CD4-positive, alpha-beta T cell (primary cell): ENCODE measurements at regions of chr12 and their contacts with region 1.

Region 1: GRCh38 chr12:111942557-111942956 is 70.4 kb downstream of the TMEM116 start:
- DNase-seq: no peak
- ATAC-seq: no peak
- H3K4me3 ChIP-seq: no peak overlapping the region
- H3K4me3 Mint-ChIP-seq: no peak overlapping the region
- H3K27ac ChIP-seq: no peak overlapping the region
- H3K27ac Mint-ChIP-seq: no peak overlapping the region
- H3K4me1 ChIP-seq: peaks cover 6% of the 10 kb centered on the region
- H3K4me1 Mint-ChIP-seq: peaks cover 18% of the 10 kb centered on the region
- H3K27me3 ChIP-seq: no peaks in the 10 kb centered on the region
- H3K27me3 Mint-ChIP-seq: no peaks in the 10 kb centered on the region
- CTCF ChIP-seq: no peak

Region 2: GRCh38 chr12:111993292-111994150 is 51.0 kb after region 1 on chr12:
- CTCF ChIA-PET with region 1: interaction called, 3 read pairs
- POLR2A ChIA-PET with region 1: interaction called, 13 read pairs
- intact Hi-C with region 1: loop called in 1 of 2 experiments (anchors 5 kb)
- DNase-seq: peak in 7 of 14 experiments; percentile 18 to 72 (median 52)
- ATAC-seq: peak; percentile 78
- H3K4me3 ChIP-seq: peak overlapping the region; percentile 57
- H3K4me3 Mint-ChIP-seq: peak overlapping the region; percentile 81
- H3K27ac ChIP-seq: peak overlapping the region; percentile 31 to 44
- H3K27ac Mint-ChIP-seq: peak overlapping the region; percentile 86
- H3K4me1 ChIP-seq: peaks cover 56% of the 10 kb centered on the region
- H3K4me1 Mint-ChIP-seq: peaks cover 80% of the 10 kb centered on the region
- H3K27me3 ChIP-seq: no peaks in the 10 kb centered on the region
- H3K27me3 Mint-ChIP-seq: no peaks in the 10 kb centered on the region
- CTCF ChIP-seq: no peak

Region 3: DNA sequence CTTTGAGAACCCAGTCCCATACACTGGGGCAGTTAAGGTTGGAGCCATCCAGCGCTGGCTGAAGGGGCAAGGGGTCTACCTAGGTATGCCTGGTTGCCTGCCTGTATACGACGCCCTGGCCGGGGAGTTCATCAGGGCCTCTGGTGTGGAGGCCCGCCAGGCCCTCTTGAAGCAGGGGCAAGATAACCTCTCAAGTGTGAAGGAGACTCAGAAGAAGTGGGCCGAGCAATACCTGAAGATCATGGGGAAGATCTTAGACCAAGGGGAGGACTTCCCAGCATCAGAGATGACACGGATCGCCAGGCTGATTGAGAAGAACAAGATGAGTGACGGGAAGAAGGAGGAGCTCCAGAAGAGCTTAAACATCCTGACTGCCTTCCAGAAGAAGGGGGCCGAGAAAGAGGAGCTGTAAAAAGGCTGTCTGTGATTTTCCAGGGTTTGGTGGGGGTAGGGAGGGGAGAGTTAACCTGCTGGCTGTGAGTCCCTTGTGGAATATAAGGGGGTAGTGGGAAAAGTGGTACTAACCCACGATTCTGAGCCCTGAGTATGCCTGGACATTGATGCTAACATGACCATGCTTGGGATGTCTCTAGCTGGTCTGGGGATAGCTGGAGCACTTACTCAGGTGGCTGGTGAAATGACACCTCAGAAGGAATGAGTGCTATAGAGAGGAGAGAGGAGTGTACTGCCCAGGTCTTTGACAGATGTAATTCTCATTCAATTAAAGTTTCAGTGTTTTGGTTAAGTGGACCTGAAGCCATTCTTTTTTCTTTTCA is 79.9 kb after region 1 on chr12:
- CTCF ChIA-PET with region 1: interaction called, 11 read pairs
- POLR2A ChIA-PET with region 1: no interaction called
- intact Hi-C with region 1: no loop called
- DNase-seq: no peak
- ATAC-seq: no peak
- H3K4me3 ChIP-seq: no peak overlapping the region
- H3K4me3 Mint-ChIP-seq: no peak overlapping the region
- H3K27ac ChIP-seq: no peak overlapping the region
- H3K27ac Mint-ChIP-seq: peak overlapping the region; percentile 63
- H3K4me1 ChIP-seq: peaks cover 28% of the 10 kb centered on the region
- H3K4me1 Mint-ChIP-seq: peaks cover 45% of the 10 kb centered on the region
- H3K27me3 ChIP-seq: no peaks in the 10 kb centered on the region
- H3K27me3 Mint-ChIP-seq: no peaks in the 10 kb centered on the region
- CTCF ChIP-seq: no peak

Region 4: DNA sequence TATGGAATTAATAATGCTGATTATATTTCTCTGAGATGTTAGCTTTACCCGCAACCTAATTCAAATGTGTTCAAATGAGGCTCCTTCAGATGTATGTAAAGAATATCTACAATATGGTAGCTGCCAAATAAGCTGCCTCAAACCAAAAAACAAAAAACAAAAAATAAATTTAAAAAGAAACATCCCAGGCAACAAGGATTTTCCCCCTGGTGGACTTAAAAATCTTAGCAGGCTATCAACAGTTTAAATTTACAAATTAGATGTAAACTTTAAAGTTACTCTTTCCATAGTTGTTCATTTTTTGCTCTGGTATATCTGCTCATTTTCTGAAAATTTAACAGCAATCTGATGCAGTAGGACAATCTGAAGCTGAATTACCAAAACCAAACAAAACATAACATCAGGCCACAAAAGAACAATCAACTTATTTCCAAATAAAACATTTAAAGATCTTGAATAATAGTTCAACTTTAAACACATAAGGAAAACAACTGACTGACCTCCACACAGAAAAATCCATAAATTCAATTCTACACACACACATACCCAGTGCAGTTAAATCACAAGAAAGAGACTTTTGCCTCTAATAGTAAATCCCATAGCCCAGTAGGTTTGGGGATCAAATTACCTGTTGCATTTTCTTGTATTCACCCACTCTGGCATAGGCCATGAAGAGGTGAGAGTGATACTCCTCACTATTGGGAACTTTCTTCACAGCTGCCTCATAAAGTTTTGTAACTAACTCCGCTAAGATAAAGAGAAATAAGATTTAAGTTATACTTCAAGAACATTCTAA is 144.7 kb after region 1 on chr12:
- CTCF ChIA-PET with region 1: no interaction called
- POLR2A ChIA-PET with region 1: no interaction called
- intact Hi-C with region 1: loop called in 1 of 2 experiments (anchors 2 kb)
- DNase-seq: no peak
- ATAC-seq: no peak
- H3K4me3 ChIP-seq: no peak overlapping the region
- H3K4me3 Mint-ChIP-seq: no peak overlapping the region
- H3K27ac ChIP-seq: no peak overlapping the region
- H3K27ac Mint-ChIP-seq: no peak overlapping the region
- H3K4me1 ChIP-seq: no peaks in the 10 kb centered on the region
- H3K4me1 Mint-ChIP-seq: peaks cover 10% of the 10 kb centered on the region
- H3K27me3 ChIP-seq: no peaks in the 10 kb centered on the region
- H3K27me3 Mint-ChIP-seq: no peaks in the 10 kb centered on the region
- CTCF ChIP-seq: no peak

Region 5: DNA sequence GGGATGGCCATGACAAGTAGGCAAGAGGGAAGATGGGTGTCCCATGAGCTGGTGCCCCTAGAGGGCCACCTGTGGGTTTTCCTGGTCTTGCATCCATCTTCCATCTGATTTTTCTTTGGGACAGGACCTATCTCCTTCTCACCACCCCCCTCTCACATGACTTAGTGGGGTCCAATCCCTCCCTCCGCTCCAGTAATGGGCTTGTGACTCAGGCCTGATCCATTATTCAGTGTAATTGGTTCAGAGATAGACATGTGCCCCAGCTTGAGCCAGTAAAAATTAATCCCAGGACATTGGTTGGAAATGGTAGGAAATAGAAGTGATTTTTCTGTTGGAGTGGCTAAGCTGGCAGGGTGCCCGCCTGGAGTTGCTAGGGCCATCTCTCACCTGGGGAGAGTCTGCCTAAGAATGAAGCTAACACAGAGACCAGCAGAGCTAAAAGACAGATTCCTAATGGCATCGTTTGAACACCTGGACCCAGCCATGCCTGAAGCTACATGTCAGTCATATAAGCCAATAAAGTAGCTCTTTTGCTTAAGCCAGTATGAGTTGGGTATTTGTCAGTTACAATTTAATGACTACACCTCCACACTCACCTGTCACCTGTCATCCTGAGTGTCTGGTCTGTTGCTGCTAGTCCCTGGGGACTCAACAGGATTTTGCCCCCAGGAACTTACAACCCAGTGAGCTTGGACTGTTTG is 1178.3 kb after region 1 on chr12:
- CTCF ChIA-PET with region 1: no interaction called
- POLR2A ChIA-PET with region 1: no interaction called
- intact Hi-C with region 1: no loop called
- DNase-seq: no peak
- ATAC-seq: no peak
- H3K4me3 ChIP-seq: no peak overlapping the region
- H3K4me3 Mint-ChIP-seq: no peak overlapping the region
- H3K27ac ChIP-seq: no peak overlapping the region
- H3K27ac Mint-ChIP-seq: no peak overlapping the region
- H3K4me1 ChIP-seq: no peaks in the 10 kb centered on the region
- H3K4me1 Mint-ChIP-seq: no peaks in the 10 kb centered on the region
- H3K27me3 ChIP-seq: no peaks in the 10 kb centered on the region
- H3K27me3 Mint-ChIP-seq: no peaks in the 10 kb centered on the region
- CTCF ChIP-seq: no peak